ENCODE measurements at regions of chr5 and their contacts with region 1.

Region 1: DNA sequence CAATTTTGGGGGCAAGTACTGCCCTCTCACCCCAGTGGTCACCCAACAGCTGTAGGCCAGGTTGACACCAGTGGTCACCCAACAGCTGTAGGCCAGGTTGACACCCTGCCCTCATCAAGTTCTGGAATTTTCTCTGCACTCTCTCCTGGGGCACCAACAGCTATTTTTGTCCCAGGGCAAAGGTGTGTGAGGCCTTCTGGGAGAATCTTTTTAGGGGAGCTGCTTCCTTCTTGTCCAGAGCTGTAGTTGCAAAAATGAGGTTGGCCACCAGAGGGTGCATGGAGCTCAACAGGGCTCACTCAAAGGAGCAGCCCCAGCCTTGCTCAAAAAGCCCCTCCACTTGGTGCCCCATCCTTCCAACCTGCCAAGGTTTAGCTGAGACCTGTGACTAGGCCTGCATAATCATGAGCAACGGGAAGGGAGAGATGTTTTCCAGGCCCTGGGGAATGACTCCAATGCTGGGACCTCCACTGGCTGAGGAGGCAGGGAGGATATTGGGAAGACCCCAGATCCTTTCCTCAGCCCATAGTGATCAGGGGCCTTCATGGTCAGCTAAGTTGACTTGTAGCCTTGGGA is 10.6 kb upstream of the P4HA2 start:
- DNase-seq: peak; percentile 32
- ATAC-seq: peak; percentile 98
- H3K4me3 ChIP-seq: no peak overlapping the region
- H3K27ac ChIP-seq: no peak overlapping the region
- H3K4me1 ChIP-seq: no peaks in the 10 kb centered on the region
- H3K27me3 ChIP-seq: no peaks in the 10 kb centered on the region
- CTCF ChIP-seq: peak; percentile 83 to 87 (median 87)
- EP300 ChIP-seq: no peak
- POLR2A ChIP-seq: no peak
- RAD21 ChIP-seq: peak; percentile 83

Region 2: GRCh38 chr5:132064738-132065331 is 173.4 kb before region 1 on chr5:
- CTCF ChIA-PET with region 1: interaction called, 15 read pairs
- POLR2A ChIA-PET with region 1: no interaction called
- RAD21 ChIA-PET with region 1: interaction called, 7 read pairs
- SMC1A ChIA-PET with region 1: interaction called, 5 read pairs
- in situ Hi-C with region 1: no loop called
- intact Hi-C with region 1: loop called (anchors 2 kb)
- DNase-seq: peak; percentile 45
- ATAC-seq: peak; percentile 91
- H3K4me3 ChIP-seq: no peak overlapping the region
- H3K27ac ChIP-seq: no peak overlapping the region
- H3K4me1 ChIP-seq: no peaks in the 10 kb centered on the region; the same call in 1 of the 2 replicates
- H3K27me3 ChIP-seq: no peaks in the 10 kb centered on the region; a peak in 1 of 4 replicates
- CTCF ChIP-seq: peak; percentile 93 to 97 (median 97)
- EP300 ChIP-seq: no peak
- POLR2A ChIP-seq: no peak
- RAD21 ChIP-seq: peak; percentile 90

Region 3: DNA sequence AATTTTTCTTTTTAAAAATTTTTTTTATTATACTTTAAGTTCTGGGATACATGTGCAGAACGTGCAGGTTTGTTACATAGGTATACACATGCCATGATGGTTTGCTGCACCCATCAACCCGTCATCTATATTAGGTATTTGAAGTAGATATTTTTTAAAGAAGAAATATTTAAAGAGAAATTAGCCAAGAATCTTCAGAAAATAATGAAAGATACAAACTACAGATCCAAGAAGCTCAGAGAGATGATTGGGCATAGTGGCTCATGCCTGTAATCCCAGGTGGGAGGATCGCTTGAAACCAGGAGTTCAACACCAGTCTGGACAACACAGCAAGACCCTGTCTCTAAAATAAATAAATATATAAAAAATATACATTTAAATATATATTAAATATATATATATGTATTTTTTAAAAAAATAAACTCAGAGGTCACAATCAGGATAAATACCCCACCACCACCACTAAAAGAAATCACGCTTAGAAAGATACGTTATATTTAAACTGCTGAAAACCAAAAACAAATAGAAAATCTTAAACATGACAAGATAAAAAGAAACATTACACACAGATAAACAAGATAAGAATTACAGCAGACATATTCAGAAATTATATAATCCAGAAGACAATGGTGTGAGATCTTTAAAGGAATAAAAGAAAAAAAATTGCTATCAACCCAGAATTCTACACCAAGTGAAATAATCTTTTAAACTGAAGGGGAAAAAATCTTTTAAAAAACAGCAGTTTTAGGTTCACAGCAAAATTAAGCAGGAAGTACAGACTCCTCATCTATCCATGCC is 107.1 kb before region 1 on chr5:
- CTCF ChIA-PET with region 1: no interaction called
- POLR2A ChIA-PET with region 1: no interaction called
- RAD21 ChIA-PET with region 1: no interaction called
- SMC1A ChIA-PET with region 1: no interaction called
- in situ Hi-C with region 1: no loop called
- intact Hi-C with region 1: no loop called
- DNase-seq: no peak
- ATAC-seq: no peak
- H3K4me3 ChIP-seq: no peak overlapping the region
- H3K27ac ChIP-seq: no peak overlapping the region
- H3K4me1 ChIP-seq: no peaks in the 10 kb centered on the region
- H3K27me3 ChIP-seq: no peaks in the 10 kb centered on the region
- CTCF ChIP-seq: no peak
- EP300 ChIP-seq: no peak
- POLR2A ChIP-seq: no peak
- RAD21 ChIP-seq: no peak

Region 4: DNA sequence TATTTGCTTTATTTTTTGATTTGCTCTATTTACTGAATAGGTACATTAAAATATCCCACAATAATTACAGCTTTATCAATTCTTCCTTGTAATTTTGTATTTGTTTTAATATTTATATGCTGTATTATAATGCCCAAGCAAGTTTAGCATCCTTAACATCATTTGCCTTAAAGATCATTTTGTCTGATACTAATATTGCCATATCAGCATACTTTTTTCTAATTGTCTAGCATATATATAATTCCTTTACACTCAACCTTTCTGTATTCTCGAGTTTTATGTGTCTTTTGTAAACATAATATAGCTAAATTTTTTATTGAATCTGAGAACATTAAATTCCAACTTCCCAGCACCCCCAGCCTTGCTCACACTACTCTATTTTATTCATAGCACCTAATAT is 75.3 kb before region 1 on chr5:
- CTCF ChIA-PET with region 1: no interaction called
- POLR2A ChIA-PET with region 1: no interaction called
- RAD21 ChIA-PET with region 1: no interaction called
- SMC1A ChIA-PET with region 1: no interaction called
- in situ Hi-C with region 1: no loop called
- intact Hi-C with region 1: no loop called
- DNase-seq: no peak
- ATAC-seq: no peak
- H3K4me3 ChIP-seq: no peak overlapping the region
- H3K27ac ChIP-seq: no peak overlapping the region
- H3K4me1 ChIP-seq: no peaks in the 10 kb centered on the region
- H3K27me3 ChIP-seq: no peaks in the 10 kb centered on the region
- CTCF ChIP-seq: no peak
- EP300 ChIP-seq: no peak
- POLR2A ChIP-seq: no peak
- RAD21 ChIP-seq: no peak

Region 5: DNA sequence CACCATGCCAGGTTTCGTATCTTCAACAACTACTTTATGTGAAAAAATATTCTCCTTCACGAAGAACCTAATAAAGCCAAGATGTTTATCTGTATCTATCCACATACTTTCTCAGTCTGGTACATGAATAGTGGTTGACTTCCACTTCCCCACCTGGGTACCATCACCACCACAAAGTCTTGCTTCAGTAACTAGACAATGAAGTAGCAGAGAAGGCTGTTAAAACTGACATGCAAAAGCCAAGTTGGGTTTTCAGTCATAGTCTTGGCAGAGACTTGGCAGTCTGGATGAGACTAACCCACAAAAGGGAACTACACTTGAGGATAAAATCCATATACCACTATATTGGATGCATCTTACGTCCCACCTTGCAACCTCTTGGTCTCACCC is 15.6 kb before region 1 on chr5:
- CTCF ChIA-PET with region 1: interaction called, 41 read pairs
- POLR2A ChIA-PET with region 1: interaction called, 7 read pairs
- RAD21 ChIA-PET with region 1: interaction called, 18 read pairs
- SMC1A ChIA-PET with region 1: interaction called, 10 read pairs
- in situ Hi-C with region 1: no loop called
- intact Hi-C with region 1: no loop called
- DNase-seq: peak; percentile 38
- ATAC-seq: peak; percentile 75
- H3K4me3 ChIP-seq: no peak overlapping the region
- H3K27ac ChIP-seq: no peak overlapping the region
- H3K4me1 ChIP-seq: peaks cover 3% of the 10 kb centered on the region
- H3K27me3 ChIP-seq: peaks cover 0 to 5% of the 10 kb centered on the region in 2 experiments; a peak in 2 of 4 replicates
- CTCF ChIP-seq: no peak
- EP300 ChIP-seq: peak in 1 of 2 experiments; percentile 33; a peak in 1 of 4 replicates
- POLR2A ChIP-seq: no peak
- RAD21 ChIP-seq: no peak

Region 6: DNA sequence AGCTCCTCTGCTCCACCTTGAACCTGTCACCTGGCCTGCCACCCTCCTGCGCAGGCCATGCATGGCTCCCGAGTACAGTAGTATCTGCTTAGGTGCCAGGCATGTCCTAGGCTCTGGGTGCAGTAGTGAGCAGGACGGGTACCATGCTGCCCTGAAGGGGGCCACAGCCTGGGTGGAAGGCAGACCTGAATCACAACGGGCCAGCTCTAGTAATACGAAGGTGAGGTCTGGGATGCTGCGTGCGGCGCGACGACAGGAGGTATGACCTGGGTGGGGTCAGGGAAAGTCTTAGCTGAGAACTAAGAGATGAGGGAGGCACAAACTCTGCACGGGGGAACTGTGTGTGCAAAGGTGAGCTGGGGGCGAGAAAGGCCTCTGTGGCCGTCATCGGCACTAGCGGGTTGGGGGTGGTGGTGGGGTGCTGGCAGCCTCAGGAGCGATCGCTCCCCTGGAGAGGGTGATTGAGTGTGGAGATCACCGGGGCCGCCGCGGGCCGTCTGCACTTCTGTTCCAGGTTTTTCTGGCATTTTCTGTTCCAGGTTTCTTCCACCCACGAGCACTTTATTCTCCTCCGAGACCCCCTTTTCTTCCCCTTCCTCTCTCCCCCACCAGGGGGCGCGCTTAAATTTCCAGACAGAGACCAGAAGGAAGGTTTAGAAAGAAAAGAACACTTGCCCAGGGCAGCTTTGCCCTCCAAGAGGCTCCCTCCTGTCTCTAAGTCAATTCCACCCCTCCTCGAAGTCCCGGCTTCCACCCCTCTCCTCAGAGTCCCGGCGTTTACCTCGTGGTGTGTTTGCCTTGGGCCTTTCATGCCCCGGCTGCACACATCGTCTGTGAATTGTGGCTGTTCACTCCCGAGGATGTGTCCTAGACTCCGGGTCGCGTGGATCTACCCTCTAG is 34.3 kb after region 1 on chr5:
- CTCF ChIA-PET with region 1: interaction called, 117 read pairs
- POLR2A ChIA-PET with region 1: interaction called, 9 read pairs
- RAD21 ChIA-PET with region 1: interaction called, 26 read pairs
- SMC1A ChIA-PET with region 1: interaction called, 33 read pairs
- in situ Hi-C with region 1: no loop called
- intact Hi-C with region 1: loop called (anchors 2 kb)
- DNase-seq: no peak
- ATAC-seq: no peak
- H3K4me3 ChIP-seq: no peak overlapping the region
- H3K27ac ChIP-seq: no peak overlapping the region
- H3K4me1 ChIP-seq: peaks cover 30% of the 10 kb centered on the region
- H3K27me3 ChIP-seq: no peaks in the 10 kb centered on the region
- CTCF ChIP-seq: peak; percentile 66 to 81 (median 77)
- EP300 ChIP-seq: no peak
- POLR2A ChIP-seq: no peak
- RAD21 ChIP-seq: peak; percentile 67

Region 7: DNA sequence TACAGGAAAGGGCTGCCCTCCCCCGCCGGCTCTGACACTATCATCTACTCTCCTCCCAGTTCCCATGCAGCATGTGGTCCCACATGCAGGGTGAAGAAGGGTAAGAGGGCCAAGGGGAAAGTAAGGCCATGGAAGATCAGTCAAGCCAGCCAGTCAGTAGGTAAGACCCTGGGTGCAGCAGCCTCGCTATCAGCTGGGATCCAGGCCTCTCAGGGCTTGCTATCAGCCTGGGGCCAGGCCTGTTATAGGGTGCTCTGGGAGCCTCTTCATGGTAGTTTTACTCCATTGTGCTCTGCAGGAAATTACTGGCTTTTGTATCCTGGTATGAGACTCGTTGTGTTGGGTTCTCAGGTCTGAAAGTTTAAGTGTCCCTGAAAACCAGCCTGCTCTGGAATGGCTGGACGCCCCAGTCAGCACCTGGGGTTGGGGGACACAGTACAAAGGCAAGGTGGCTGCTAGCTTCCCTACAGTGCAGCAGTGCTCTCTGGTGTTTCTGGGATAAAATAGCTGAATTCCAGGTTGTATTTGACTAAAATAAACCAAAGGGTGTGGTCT is 77.3 kb after region 1 on chr5:
- CTCF ChIA-PET with region 1: interaction called, 10 read pairs
- POLR2A ChIA-PET with region 1: no interaction called
- RAD21 ChIA-PET with region 1: interaction called, 3 read pairs
- SMC1A ChIA-PET with region 1: interaction called, 4 read pairs
- in situ Hi-C with region 1: no loop called
- intact Hi-C with region 1: no loop called
- DNase-seq: no peak
- ATAC-seq: no peak
- H3K4me3 ChIP-seq: no peak overlapping the region
- H3K27ac ChIP-seq: no peak overlapping the region
- H3K4me1 ChIP-seq: no peaks in the 10 kb centered on the region
- H3K27me3 ChIP-seq: no peaks in the 10 kb centered on the region; a peak in 1 of 4 replicates
- CTCF ChIP-seq: no peak; a peak in 1 of 6 replicates
- EP300 ChIP-seq: no peak
- POLR2A ChIP-seq: no peak
- RAD21 ChIP-seq: peak; percentile 17; the same call in 1 of the 2 replicates

Region 8: DNA sequence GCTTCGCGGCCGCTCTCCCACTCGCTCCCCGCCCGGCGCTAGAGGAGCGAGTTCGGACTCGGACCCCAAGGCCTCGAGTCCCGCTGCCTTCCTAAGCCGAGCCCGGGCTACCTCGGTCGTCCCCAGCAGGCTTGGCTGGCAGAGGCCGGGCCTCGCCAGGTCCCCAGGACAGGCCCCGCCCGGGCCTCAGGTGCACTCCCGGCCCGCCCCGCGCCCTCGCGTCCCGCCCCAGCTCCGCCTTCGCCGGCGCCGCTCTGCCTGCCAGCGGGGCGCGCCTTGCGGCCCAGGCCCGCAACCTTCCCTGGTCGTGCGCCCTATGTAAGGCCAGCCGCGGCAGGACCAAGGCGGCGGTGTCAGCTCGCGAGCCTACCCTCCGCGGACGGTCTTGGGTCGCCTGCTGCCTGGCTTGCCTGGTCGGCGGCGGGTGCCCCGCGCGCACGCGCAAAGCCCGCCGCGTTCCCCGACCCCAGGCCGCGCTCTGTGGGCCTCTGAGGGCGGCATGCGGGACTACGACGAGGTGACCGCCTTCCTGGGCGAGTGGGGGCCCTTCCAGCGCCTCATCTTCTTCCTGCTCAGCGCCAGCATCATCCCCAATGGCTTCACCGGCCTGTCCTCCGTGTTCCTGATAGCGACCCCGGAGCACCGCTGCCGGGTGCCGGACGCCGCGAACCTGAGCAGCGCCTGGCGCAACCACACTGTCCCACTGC is 131.4 kb after region 1 on chr5 and contains the start of gene SLC22A5:
- CTCF ChIA-PET with region 1: interaction called, 40 read pairs
- POLR2A ChIA-PET with region 1: interaction called, 6 read pairs
- RAD21 ChIA-PET with region 1: interaction called, 22 read pairs
- SMC1A ChIA-PET with region 1: interaction called, 24 read pairs
- in situ Hi-C with region 1: no loop called
- intact Hi-C with region 1: no loop called
- DNase-seq: no peak
- ATAC-seq: peak; percentile 97
- H3K4me3 ChIP-seq: peak within 1 kb of the TSS; percentile 84
- H3K27ac ChIP-seq: peak within 1 kb of the TSS; percentile 31; the same call in 1 of the 2 replicates
- H3K4me1 ChIP-seq: peaks cover 8% of the 10 kb centered on the region
- H3K27me3 ChIP-seq: no peaks in the 10 kb centered on the region; a peak in 2 of 4 replicates
- CTCF ChIP-seq: no peak
- EP300 ChIP-seq: no peak
- POLR2A ChIP-seq: peak; percentile 71
- RAD21 ChIP-seq: no peak
- polyA plus RNA-seq, gene SLC22A5: 1.1 to 1.9 TPM